Common myeloid progenitor, CD34-positive (primary cell): ENCODE measurements at regions of chr12 and their contacts with region 1.

Region 1: DNA sequence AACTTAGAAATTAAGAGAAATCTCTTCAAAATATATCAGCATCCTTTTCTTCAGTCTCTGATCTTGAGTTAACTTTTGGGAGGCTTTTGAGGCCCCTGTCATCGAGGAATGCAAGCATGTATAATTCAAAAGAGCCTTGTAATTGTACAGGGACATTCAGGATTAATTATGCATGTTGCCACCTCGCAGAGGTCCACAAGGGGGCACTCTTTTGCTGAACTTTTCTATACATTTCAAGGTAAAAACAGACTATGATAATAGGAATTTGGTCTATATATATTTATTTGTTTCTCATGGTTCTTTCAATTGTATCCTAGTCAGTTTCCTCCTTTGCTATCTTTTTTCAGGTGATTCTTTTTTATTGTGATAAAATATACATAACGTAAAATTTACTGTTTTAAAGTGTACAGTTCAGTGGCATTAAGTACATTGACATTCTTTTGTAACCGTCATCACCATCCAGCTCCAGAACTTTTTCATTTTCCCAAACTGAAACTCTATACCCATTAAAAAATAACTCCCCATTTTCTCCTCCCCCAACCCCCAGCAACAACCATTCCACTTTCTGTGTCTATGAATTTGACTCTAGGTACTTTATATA is 47.0 kb upstream of the SLC2A13 start:
- DNase-seq: peak; percentile 56 to 78 (median 65)
- H3K4me3 ChIP-seq: no peak overlapping the region
- H3K27ac ChIP-seq: no peak overlapping the region
- H3K4me1 ChIP-seq: peaks cover 0 to 5% (median 0%) of the 10 kb centered on the region in 4 experiments
- H3K27me3 ChIP-seq: no peaks in the 10 kb centered on the region

Region 2: DNA sequence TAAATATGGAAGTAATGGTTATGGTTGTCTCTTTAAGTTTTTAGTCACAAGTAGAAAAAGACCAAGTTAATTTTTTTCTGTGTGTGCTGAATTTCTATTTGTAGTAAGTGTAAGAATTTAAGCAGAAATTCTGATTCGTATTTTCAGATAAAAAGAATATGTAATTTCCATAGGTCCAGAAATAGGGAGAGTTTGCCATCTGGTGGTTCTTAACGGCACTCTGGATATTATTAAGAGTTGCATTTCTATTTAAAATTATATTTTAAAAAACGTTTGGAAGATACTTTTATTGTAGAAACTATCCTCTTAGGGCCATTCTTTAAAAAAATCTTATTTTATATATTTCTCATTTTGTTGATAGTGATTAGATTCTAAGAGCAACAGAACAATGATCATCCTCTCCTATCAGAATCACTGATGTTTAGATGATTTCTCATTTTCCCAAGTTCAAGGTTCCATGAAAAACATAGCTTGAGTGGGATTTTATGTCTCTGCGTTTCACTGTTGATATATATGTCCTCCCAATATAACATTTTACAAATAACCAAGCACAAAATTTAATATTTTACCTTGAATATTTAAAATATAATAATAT is 160.2 kb after region 1 on chr12:
- CTCF ChIA-PET with region 1: interaction called, 11 read pairs
- POLR2A ChIA-PET with region 1: no interaction called
- DNase-seq: peak; percentile 24 to 64 (median 51)
- H3K4me3 ChIP-seq: no peak overlapping the region
- H3K27ac ChIP-seq: no peak overlapping the region
- H3K4me1 ChIP-seq: no peaks in the 10 kb centered on the region
- H3K27me3 ChIP-seq: no peaks in the 10 kb centered on the region